ENCODE measurements at regions of chr16 and their contacts with region 1.

Region 1: GRCh38 chr16:67017810-67018488 is 11.0 kb upstream of the CBFB start:
- DNase-seq: peak; percentile 95
- ATAC-seq: peak; percentile 87
- H3K4me3 Mint-ChIP-seq: no peak overlapping the region
- H3K27ac Mint-ChIP-seq: peak overlapping the region; percentile 52
- H3K4me1 Mint-ChIP-seq: peaks cover 17% of the 10 kb centered on the region
- H3K27me3 Mint-ChIP-seq: no peaks in the 10 kb centered on the region
- CTCF ChIP-seq: peak; percentile 78

Region 2: GRCh38 chr16:66977341-66978113 is 40.4 kb before region 1 on chr16:
- CTCF ChIA-PET with region 1: interaction called, 53 read pairs
- POLR2A ChIA-PET with region 1: interaction called, 6 read pairs
- intact Hi-C with region 1: loop called (anchors 5 kb)
- DNase-seq: peak; percentile 96
- ATAC-seq: peak; percentile 96
- H3K4me3 Mint-ChIP-seq: no peak overlapping the region
- H3K27ac Mint-ChIP-seq: no peak overlapping the region
- H3K4me1 Mint-ChIP-seq: peaks cover 44% of the 10 kb centered on the region
- H3K27me3 Mint-ChIP-seq: peaks cover 4% of the 10 kb centered on the region
- CTCF ChIP-seq: peak; percentile 96

Region 3: GRCh38 chr16:67000384-67001351 is 17.3 kb before region 1 on chr16:
- CTCF ChIA-PET with region 1: interaction called, 7 read pairs
- POLR2A ChIA-PET with region 1: interaction called, 18 read pairs
- intact Hi-C with region 1: no loop called
- DNase-seq: peak; percentile 74
- ATAC-seq: peak; percentile 58
- H3K4me3 Mint-ChIP-seq: peak overlapping the region; percentile 73
- H3K27ac Mint-ChIP-seq: peak overlapping the region; percentile 58
- H3K4me1 Mint-ChIP-seq: peaks cover 17% of the 10 kb centered on the region
- H3K27me3 Mint-ChIP-seq: peaks cover 6% of the 10 kb centered on the region
- CTCF ChIP-seq: no peak

Region 4: DNA sequence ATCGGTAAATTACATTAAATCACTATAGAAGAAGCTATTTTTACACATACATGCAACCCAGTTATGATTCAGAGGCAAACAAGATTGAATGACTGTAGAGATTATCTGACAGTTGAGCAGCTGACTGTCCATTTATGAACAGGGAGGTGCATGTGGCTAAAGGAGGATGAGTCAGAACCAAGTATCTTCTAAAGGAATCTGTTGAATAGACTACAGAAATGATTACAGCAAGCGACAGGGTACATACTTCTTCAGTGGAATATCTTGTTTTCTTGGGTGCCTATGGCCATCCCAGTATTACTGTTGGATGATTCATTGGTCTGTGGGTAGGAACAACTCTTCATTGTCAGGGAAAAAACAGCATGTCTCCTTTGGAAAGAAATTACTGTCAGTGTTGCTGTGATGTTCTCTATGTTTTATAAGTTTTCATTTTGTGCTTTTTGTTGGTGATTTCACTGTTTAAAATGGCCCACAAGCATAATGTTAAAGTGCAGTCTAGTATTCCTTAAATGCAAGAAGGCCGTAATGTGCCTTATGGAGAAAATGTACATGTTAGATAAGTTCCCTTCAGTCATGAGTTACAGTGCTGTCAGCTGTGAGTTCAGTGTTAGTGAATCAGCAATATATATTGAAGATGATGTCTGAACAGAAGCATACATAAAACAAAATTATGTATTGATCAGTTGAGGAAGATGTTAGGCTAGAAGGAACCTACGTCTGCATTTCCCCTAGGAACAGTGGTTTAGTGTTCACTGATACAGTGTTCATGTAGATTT is 38.0 kb after region 1 on chr16:
- CTCF ChIA-PET with region 1: interaction called, 19 read pairs
- POLR2A ChIA-PET with region 1: interaction called, 3 read pairs
- intact Hi-C with region 1: no loop called
- DNase-seq: peak; percentile 29
- ATAC-seq: peak; percentile 78
- H3K4me3 Mint-ChIP-seq: no peak overlapping the region
- H3K27ac Mint-ChIP-seq: peak overlapping the region; percentile 70
- H3K4me1 Mint-ChIP-seq: peaks cover 43% of the 10 kb centered on the region
- H3K27me3 Mint-ChIP-seq: no peaks in the 10 kb centered on the region
- CTCF ChIP-seq: no peak

Region 5: GRCh38 chr16:67109407-67110135 is 91.6 kb after region 1 on chr16 and contains the start of gene PHAF1:
- CTCF ChIA-PET with region 1: interaction called, 48 read pairs
- POLR2A ChIA-PET with region 1: interaction called, 5 read pairs
- intact Hi-C with region 1: loop called (anchors 5 kb)
- DNase-seq: peak; percentile 94
- ATAC-seq: peak; percentile 96
- H3K4me3 Mint-ChIP-seq: peak within 1 kb of the TSS; percentile 95
- H3K27ac Mint-ChIP-seq: peak within 1 kb of the TSS; percentile 85
- H3K4me1 Mint-ChIP-seq: peaks cover 23% of the 10 kb centered on the region
- H3K27me3 Mint-ChIP-seq: no peaks in the 10 kb centered on the region
- CTCF ChIP-seq: no peak
- total RNA-seq, gene PHAF1: 11.3 to 14.0 TPM